Activated naive CD4-positive, alpha-beta T cell treated with anti-CD3 and anti-CD28 coated beads for 36 hours (primary cell): ENCODE measurements at regions of chr2 and their contacts with region 1.

Region 1: GRCh38 chr2:206274434-206275268 is at the start of gene ZDBF2:
- DNase-seq: peak; percentile 45
- H3K4me3 Mint-ChIP-seq: peak within 1 kb of the TSS; percentile 82
- H3K27ac Mint-ChIP-seq: peak within 1 kb of the TSS; percentile 63
- H3K4me1 Mint-ChIP-seq: peaks cover 11% of the 10 kb centered on the region
- H3K27me3 Mint-ChIP-seq: peaks cover 38% of the 10 kb centered on the region
- total RNA-seq, gene ZDBF2: 3.9 to 4.8 TPM

Region 2: GRCh38 chr2:206031162-206031784 is 243.4 kb before region 1 on chr2:
- CTCF ChIA-PET with region 1: no interaction called
- intact Hi-C with region 1: loop called (anchors 10 kb)
- DNase-seq: no peak
- H3K4me3 Mint-ChIP-seq: no peak overlapping the region
- H3K27ac Mint-ChIP-seq: no peak overlapping the region
- H3K4me1 Mint-ChIP-seq: peaks cover 58% of the 10 kb centered on the region
- H3K27me3 Mint-ChIP-seq: no peaks in the 10 kb centered on the region

Region 3: DNA sequence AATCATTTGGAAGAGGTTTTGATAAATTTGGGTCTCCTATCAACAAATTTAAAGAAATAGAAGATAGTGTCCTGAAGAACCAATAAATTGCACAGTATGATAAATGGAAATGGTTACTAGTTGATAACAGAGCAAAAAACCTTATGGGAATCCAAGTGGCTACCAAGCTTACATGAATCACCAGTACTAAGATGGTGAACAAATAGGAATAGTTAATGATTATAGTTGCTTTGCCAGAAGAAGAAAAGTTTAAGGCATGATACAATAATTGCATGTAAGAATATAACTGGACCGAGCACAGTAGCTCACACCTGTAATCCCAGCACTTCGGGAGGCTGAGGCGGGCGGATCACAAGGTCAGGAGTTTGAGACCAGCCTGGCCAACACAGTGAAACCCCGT is 169.1 kb before region 1 on chr2:
- CTCF ChIA-PET with region 1: no interaction called
- intact Hi-C with region 1: no loop called
- DNase-seq: no peak
- H3K4me3 Mint-ChIP-seq: no peak overlapping the region
- H3K27ac Mint-ChIP-seq: no peak overlapping the region
- H3K4me1 Mint-ChIP-seq: no peaks in the 10 kb centered on the region
- H3K27me3 Mint-ChIP-seq: no peaks in the 10 kb centered on the region

Region 4: DNA sequence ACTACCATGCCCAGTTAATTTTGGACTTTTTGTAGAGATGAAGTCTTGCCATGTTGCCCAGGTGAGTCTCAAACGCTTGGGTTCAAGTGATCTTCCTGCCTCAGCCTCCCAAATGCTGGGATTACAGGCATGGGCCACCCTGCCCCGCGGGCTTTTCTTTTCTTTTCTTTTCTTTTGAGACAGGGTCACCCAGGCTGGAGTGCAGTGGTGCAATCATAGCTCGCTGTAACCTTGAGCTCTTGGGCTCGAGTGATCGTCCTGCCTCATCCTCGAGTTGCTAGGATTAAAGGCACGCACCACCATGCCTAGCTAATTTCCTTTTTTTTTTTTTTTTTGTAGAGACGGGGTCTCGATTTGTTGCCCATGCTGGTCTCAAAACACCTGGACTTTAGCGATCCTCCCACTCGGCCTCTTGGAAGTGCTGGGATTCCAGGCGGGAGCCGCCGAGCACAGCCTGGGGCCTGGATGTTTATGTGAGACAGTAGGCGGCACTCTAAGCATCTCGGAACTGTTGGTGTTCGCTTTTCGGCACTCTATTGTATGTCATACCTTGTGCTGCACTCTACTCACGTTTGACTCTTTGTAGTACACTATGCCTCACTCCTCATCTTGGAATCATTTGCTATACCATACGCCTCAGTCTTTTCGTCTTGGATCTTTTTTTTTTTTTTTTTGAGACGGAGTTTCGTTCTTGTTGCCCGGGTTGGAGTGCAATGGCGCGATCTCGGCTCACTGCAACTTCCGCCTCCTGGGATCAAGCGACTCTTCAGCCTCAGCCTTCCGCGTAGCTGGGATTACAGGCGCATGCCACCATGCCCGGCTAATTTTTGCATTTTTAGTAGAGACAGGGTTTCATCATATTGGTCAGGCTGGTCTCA is 24.7 kb before region 1 on chr2:
- CTCF ChIA-PET with region 1: no interaction called
- intact Hi-C with region 1: no loop called
- DNase-seq: peak; percentile 17
- H3K4me3 Mint-ChIP-seq: peak overlapping the region; percentile 74
- H3K27ac Mint-ChIP-seq: no peak overlapping the region
- H3K4me1 Mint-ChIP-seq: peaks cover 2% of the 10 kb centered on the region
- H3K27me3 Mint-ChIP-seq: peaks cover 43% of the 10 kb centered on the region

Region 5: GRCh38 chr2:206323486-206323885 is 48.8 kb after region 1 on chr2:
- CTCF ChIA-PET with region 1: no interaction called
- intact Hi-C with region 1: no loop called
- DNase-seq: no peak
- H3K4me3 Mint-ChIP-seq: no peak overlapping the region
- H3K27ac Mint-ChIP-seq: no peak overlapping the region
- H3K4me1 Mint-ChIP-seq: no peaks in the 10 kb centered on the region
- H3K27me3 Mint-ChIP-seq: no peaks in the 10 kb centered on the region

Region 6: DNA sequence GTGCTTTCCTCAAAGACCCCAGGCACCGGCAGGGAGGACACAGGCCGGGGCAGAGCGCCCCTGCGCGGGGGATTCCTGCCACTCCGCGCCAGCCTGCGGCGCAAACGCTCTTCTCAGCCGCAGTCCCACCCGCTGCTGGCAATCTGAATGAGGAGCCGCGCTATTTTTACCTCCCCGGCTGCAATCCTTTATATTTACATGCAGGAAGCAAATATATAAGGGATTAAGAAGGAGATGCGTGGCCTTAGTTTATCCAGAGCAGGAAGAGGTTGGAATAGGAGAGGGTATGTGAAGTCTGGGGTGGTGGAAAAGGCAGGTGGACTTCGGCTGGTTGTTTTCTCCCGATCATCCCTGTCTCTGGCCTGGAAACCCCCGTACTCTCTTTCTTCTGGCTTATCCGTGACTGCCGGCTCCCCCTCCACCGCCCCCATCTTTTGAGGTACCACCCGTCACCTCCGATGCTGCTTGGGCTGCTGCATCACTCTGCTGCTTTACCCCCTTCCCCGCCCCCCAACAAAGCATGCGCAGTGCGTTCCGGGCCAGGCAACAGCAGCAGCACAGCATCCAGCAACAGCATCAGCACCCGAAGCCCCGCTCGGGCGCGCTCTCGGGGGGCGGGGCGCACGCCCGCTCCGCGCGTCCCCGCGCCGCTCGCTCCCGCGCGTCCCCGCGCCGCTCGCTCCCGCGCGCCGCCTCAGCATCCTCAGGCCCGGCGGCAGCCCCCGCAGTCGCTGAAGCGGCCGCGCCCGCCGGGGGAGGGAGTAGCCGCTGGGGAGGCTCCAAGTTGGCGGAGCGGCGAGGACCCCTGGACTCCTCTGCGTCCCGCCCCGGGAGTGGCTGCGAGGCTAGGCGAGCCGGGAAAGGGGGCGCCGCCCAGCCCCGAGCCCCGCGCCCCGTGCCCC is 168.4 kb after region 1 on chr2 and contains the start of gene ADAM23:
- CTCF ChIA-PET with region 1: no interaction called
- intact Hi-C with region 1: loop called (anchors 2 kb)
- DNase-seq: peak; percentile 42
- H3K4me3 Mint-ChIP-seq: peak within 1 kb of the TSS; percentile 76
- H3K27ac Mint-ChIP-seq: no peak within 1 kb of the TSS
- H3K4me1 Mint-ChIP-seq: peaks cover 13% of the 10 kb centered on the region
- H3K27me3 Mint-ChIP-seq: peaks cover 59% of the 10 kb centered on the region
- total RNA-seq, gene ADAM23: 0.10 to 0.42 TPM